ENCODE measurements at regions of chr1 and their contacts with region 1.

Region 1: GRCh38 chr1:180851995-180852887 is 60.5 kb upstream of the KIAA1614 start:
- DNase-seq: no peak
- ATAC-seq: no peak
- H3K4me3 ChIP-seq: no peak overlapping the region
- H3K27ac ChIP-seq: no peak overlapping the region
- H3K4me1 ChIP-seq: peaks cover 0 to 28% (median 16%) of the 10 kb centered on the region in 12 donors
- H3K27me3 ChIP-seq: no peaks in the 10 kb centered on the region
- CTCF ChIP-seq: no peak
- POLR2A ChIP-seq: no peak

Region 2: DNA sequence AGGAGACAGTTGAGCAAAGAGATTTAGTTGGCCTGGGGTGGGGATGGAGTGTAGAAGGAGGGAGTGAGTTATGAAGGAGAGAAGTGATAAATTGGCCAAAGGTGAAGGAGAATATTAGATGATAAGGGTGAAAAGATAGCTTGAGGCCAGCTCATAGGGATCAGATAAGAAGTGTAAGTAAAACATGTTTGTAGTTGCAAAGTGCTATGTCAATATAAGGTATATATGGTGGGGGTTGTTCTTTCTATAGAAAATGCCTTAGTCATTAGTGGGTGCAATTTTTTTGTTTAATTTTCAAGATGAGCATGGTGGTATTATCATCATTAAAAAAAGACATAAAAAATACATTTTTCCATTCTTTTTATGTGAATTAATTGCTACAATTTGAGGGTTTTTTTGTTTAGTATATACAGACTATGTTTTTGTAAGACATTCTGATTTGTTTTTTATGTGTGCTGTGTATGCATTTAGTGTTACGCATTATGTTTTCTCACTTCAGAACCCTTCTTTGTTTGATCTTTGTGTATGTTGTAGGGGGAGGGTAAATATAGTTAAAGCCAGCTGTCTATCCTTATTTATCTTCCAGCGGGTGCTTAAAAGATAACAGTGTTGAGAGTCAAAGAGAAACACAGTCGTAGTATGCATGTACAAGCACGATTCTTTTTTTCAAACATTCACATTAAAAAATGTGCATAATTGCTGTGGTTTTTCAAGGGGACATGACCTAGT is 37.2 kb before region 1 on chr1:
- intact Hi-C with region 1: loop called in 1 of 10 experiments (anchors 2 kb)
- DNase-seq: no peak
- ATAC-seq: no peak
- H3K4me3 ChIP-seq: no peak overlapping the region
- H3K27ac ChIP-seq: no peak overlapping the region
- H3K4me1 ChIP-seq: peaks cover 0 to 14% (median 0%) of the 10 kb centered on the region in 12 donors
- H3K27me3 ChIP-seq: no peaks in the 10 kb centered on the region
- CTCF ChIP-seq: no peak
- POLR2A ChIP-seq: no peak

Measured in heart left ventricle (tissue), 16 donors.